AG04449 (cell line): ENCODE measurements at regions of chr14 and their contacts with region 1.

Region 1: GRCh38 chr14:55731881-55732498 is 152.0 kb downstream of the KTN1 start:
- DNase-seq: no peak
- H3K4me3 ChIP-seq: no peak overlapping the region
- CTCF ChIP-seq: peak; percentile 56

Region 2: DNA sequence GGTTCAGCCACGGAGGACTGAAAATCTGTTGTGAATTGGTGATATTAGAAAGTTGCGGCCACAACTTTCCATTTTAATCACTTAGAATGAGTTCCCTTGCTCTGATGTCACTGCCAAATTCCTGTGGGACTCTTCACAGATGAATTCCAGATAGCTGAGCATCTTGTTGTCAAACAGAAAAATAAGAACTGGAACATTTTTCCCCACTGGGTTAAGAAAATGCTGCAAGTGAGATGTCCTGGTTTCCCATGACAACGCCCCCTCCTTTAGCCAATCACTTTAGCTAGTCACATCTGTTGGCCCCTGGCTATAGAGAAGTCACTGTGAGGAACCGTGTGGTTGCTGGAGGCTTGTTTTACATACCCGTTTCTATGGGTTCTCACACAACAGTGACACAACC is 16.1 kb before region 1 on chr14:
- CTCF ChIA-PET with region 1: interaction called, 10 read pairs
- POLR2A ChIA-PET with region 1: interaction called, 3 read pairs
- DNase-seq: peak; percentile 76
- H3K4me3 ChIP-seq: no peak overlapping the region
- CTCF ChIP-seq: no peak

Region 3: GRCh38 chr14:55721353-55721752 is 10.6 kb before region 1 on chr14:
- CTCF ChIA-PET with region 1: interaction called, 28 read pairs
- POLR2A ChIA-PET with region 1: no interaction called
- DNase-seq: peak; percentile 52
- H3K4me3 ChIP-seq: no peak overlapping the region
- CTCF ChIP-seq: no peak

Region 4: DNA sequence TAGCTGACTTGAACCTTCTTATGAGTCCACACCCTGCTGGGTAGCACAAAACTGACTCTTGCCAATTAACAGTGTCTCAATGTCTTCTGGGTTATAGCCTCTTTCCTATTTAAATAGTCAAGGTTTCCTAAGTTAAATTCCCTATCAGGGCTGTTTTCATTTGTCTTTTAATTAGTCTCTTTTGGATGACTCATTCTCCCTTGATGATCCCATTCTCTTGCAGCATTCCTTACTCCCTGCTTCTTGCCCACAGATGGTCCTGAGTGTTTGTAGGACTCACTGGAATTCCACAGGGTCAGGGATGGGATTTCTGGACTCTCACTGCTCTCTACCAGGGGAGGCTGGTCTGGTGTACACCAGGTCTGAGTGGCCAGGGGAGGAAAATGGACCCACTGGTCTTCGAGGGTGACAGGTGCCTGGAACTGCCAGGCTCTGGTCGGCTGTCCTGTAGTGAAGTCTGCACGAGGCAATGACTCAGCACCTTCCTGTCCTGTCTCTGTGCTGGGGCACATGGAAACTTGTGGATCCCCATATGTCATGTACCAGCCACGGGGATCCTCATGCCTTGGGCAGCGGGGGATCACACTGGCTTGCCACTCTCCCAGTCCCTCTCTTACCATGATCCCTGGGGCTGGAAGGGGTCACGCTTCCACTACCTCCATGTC is 149.7 kb after region 1 on chr14:
- CTCF ChIA-PET with region 1: no interaction called
- POLR2A ChIA-PET with region 1: no interaction called
- DNase-seq: no peak
- H3K4me3 ChIP-seq: no peak overlapping the region
- CTCF ChIP-seq: no peak

Region 5: GRCh38 chr14:56422703-56423213 is 690.8 kb after region 1 on chr14:
- CTCF ChIA-PET with region 1: interaction called, 30 read pairs
- POLR2A ChIA-PET with region 1: no interaction called
- DNase-seq: peak; percentile 31
- H3K4me3 ChIP-seq: no peak overlapping the region
- CTCF ChIP-seq: peak; percentile 69